H1 (cell line): ENCODE measurements at regions of chr2 and their contacts with region 1.

Region 1: GRCh38 chr2:88016086-88016959 is at the start of gene RNU2-63P:
- DNase-seq: peak; percentile 65 to 91
- H3K4me3 ChIP-seq: peak within 1 kb of the TSS; percentile 65 to 81 (median 72)
- H3K27ac ChIP-seq: peak within 1 kb of the TSS; percentile 97
- H3K4me1 ChIP-seq: peaks cover 9 to 18% (median 13%) of the 10 kb centered on the region in 4 experiments
- H3K27me3 ChIP-seq: no peaks in the 10 kb centered on the region
- CTCF ChIP-seq: no peak
- EP300 ChIP-seq: no peak; a peak in 1 of 3 replicates
- POLR2A ChIP-seq: peak; percentile 97 to 100
- RAD21 ChIP-seq: no peak
- total RNA-seq, gene RNU2-63P: 6.6 and 8.3 TPM in 2 replicates

Region 2: DNA sequence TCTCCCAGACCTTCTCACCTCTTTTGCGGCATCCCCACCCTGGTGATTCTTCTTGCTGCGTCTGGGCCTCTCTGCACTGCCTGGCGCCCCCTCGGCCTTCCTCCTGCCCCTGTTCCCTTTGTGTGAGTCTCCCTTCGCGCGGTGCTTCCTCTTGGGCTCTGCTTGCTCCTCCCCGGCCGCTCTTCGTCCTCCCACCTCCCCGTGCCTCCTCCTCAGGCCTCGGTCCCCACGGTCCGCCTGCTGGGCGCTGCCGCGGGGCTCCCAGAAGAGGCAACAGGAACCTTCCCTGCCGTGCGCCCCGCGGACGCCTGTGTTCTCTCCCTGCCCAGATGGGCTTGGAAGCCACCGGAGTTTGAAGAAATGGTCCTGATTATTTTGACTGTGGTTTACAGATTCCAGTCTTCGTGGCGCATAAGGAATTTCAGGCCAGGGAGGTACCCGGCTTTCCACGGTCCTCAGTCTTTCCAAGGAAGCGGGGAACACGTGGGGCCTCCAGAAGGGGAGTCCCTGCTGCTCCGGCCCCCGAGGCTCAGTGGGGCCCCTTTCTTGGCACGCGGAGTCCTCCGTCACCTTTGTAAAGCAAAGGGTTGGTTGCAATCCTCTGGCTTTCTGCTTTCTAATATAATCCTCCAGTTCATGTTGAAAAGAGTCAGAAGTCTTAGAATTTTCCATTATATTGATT is 13.1 kb before region 1 on chr2:
- CTCF ChIA-PET with region 1: interaction called, 5 read pairs
- POLR2A ChIA-PET with region 1: interaction called, 60 read pairs
- DNase-seq: peak in 1 of 2 experiments; percentile 68
- H3K4me3 ChIP-seq: peak overlapping the region in 1 of 4 experiments; percentile 40; a peak in 3 of 8 replicates
- H3K27ac ChIP-seq: no peak overlapping the region
- H3K4me1 ChIP-seq: peaks cover 4 to 10% (median 6%) of the 10 kb centered on the region in 4 experiments; a peak in 6 of 7 replicates
- H3K27me3 ChIP-seq: no peaks in the 10 kb centered on the region
- CTCF ChIP-seq: no peak
- EP300 ChIP-seq: no peak
- POLR2A ChIP-seq: no peak
- RAD21 ChIP-seq: no peak

Region 3: DNA sequence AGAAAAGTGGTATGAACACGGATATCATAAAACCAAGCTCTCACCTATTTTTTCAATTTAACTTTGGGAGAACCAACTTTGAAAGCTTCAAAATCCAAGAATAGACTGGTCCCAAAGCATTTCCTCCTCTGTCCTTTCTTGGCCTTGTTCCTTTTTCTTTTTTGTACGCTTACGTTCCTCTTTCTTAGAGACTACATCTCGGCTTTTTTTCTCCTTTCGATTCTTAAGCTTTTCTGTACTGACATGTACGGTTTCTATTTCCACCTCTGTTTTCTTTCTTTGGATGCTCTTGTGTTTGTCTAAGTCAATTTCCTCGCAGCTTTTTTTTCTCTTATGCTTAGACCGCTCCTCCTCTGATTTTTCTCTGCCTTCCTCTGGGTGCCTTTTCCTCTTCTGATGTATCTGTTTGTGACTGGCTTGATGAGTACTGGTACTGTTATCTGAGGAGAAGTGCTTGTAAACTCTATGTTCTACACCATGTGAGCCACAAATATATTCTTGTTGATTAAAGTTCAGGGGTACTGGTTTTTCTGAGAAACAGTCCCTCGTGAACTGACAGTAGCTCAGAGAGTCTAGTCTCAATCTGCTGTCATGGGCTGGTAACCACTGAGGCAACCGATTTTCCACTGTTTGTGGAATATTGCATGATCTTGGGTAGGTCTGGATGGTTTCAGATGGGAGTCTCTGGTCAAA is 11.5 kb after region 1 on chr2:
- CTCF ChIA-PET with region 1: no interaction called
- POLR2A ChIA-PET with region 1: interaction called, 41 read pairs
- DNase-seq: no peak
- H3K4me3 ChIP-seq: no peak overlapping the region
- H3K27ac ChIP-seq: no peak overlapping the region
- H3K4me1 ChIP-seq: no peaks in the 10 kb centered on the region; a peak in 2 of 7 replicates
- H3K27me3 ChIP-seq: no peaks in the 10 kb centered on the region
- CTCF ChIP-seq: no peak
- EP300 ChIP-seq: no peak
- POLR2A ChIP-seq: no peak
- RAD21 ChIP-seq: no peak

Region 4: GRCh38 chr2:88170472-88170892 is 154.2 kb after region 1 on chr2:
- CTCF ChIA-PET with region 1: no interaction called
- POLR2A ChIA-PET with region 1: interaction called, 22 read pairs
- DNase-seq: peak in 1 of 2 experiments; percentile 65
- H3K4me3 ChIP-seq: peak overlapping the region; percentile 62 to 83 (median 68)
- H3K27ac ChIP-seq: no peak overlapping the region; the same call in 1 of the 2 replicates
- H3K4me1 ChIP-seq: peaks cover 0 to 2% (median 0%) of the 10 kb centered on the region in 4 experiments; a peak in 3 of 7 replicates
- H3K27me3 ChIP-seq: 0 out of 7 replicates have a peak, but pooled peaks cover 0 to 2% (median 0%) of the 10 kb centered on the region in 4 experiments
- CTCF ChIP-seq: no peak
- EP300 ChIP-seq: no peak
- POLR2A ChIP-seq: peak in 1 of 2 experiments; percentile 53; a peak in 1 of 3 replicates
- RAD21 ChIP-seq: no peak